MCF 10A (cell line): ENCODE measurements at regions of chr2 and their contacts with region 1.

Region 1: DNA sequence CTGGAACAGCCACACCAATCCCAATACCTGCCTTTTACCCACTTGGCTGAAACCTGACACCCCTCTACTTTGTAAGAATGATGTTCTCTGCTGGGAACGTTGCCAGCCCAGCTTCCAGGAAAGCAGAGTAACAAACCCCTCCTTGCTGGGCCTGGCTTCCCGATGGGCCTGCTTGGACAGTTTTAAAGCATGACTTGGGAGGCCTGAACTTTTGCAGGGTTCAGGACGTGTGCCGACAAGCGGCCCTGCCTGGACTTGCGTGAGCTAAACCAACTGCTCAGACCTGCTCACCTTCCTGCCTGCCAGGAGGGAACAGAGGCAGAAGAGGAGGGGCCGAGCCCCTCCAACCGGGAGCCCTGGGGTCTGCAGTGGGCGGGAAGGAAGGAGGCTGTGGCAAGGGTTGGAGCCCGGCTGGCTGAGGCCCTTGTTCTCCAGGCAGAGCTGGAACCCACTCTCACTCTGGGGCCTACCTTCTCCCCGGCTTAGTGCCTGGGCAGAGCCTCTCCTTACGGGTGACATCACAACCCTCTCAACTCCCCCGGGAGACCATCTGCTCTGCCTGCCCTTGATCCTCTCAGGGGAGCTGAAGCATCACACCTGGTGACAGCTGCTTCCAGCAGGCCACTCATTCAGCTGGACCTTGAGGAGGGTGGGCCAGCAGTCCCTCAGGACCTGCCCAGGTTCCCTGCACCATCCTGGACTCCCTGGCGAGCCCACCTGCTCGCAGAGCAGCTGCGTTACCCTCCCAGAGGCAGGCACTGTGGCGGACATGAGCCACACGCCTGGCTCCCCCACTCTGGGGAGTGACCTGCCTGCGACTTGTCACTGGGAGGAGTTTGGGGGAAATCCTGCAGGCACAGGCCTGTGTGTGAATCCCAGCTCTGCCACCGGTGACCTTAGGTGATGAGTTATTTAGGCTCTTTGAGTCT is 13.2 kb downstream of the HS6ST1 start:
- DNase-seq: peak; percentile 100
- H3K4me3 Mint-ChIP-seq: peak overlapping the region; percentile 60
- H3K27ac Mint-ChIP-seq: peak overlapping the region; percentile 95
- H3K4me1 Mint-ChIP-seq: peaks cover 51% of the 10 kb centered on the region
- H3K27me3 Mint-ChIP-seq: no peaks in the 10 kb centered on the region
- CTCF ChIP-seq: no peak

Region 2: GRCh38 chr2:128069769-128070168 is 235.7 kb before region 1 on chr2:
- CTCF ChIA-PET with region 1: no interaction called
- POLR2A ChIA-PET with region 1: no interaction called
- intact Hi-C with region 1: loop called (anchors 10 kb)
- DNase-seq: peak; percentile 42
- H3K4me3 Mint-ChIP-seq: no peak overlapping the region
- H3K27ac Mint-ChIP-seq: no peak overlapping the region
- H3K4me1 Mint-ChIP-seq: no peaks in the 10 kb centered on the region
- H3K27me3 Mint-ChIP-seq: no peaks in the 10 kb centered on the region
- CTCF ChIP-seq: no peak

Region 3: DNA sequence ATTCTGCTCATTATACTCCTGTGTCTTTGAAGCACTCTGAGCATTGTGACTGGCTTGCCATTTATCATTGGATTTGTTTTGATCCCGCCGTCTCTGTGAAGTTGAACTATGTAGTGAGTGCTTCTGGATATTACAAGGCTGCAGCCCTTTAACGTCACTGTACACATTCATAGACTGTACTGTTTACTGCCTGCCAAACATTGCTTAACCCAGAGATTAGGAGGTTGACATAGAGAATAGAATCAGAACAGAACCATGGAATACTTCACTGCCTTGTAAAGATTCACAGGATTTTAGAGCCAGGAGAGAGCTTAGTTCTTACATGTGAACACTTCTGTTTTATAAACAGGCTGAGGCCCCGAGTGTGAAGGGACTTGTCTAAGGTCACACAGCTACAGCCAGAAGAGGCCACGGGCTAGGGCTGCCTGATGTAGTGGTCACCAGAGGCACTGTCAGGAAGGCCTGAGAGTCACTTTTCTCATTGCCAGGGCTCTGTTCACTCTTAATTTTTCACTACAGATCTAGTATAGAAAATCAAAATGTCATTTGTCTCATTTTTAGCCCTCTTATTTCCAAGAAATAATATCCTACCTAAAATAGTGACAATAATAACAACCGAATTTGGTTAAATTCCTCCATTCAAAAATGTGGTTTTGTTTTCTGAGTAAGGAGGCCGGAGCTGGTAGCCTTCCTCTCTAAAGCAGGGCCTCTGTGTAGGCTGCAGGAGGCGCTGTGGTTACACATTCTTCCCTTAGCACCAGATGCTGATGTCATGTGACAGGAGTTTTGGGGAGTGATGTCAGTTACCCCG is 126.6 kb before region 1 on chr2:
- CTCF ChIA-PET with region 1: interaction called, 3 read pairs
- POLR2A ChIA-PET with region 1: interaction called, 5 read pairs
- intact Hi-C with region 1: loop called (anchors 1 kb)
- DNase-seq: peak; percentile 68
- H3K4me3 Mint-ChIP-seq: no peak overlapping the region
- H3K27ac Mint-ChIP-seq: no peak overlapping the region
- H3K4me1 Mint-ChIP-seq: no peaks in the 10 kb centered on the region
- H3K27me3 Mint-ChIP-seq: no peaks in the 10 kb centered on the region
- CTCF ChIP-seq: peak; percentile 68

Region 4: GRCh38 chr2:128260239-128261138 is 44.9 kb before region 1 on chr2:
- CTCF ChIA-PET with region 1: interaction called, 8 read pairs
- POLR2A ChIA-PET with region 1: interaction called, 4 read pairs
- intact Hi-C with region 1: loop called (anchors 2 kb)
- DNase-seq: peak; percentile 78
- H3K4me3 Mint-ChIP-seq: no peak overlapping the region
- H3K27ac Mint-ChIP-seq: peak overlapping the region; percentile 27
- H3K4me1 Mint-ChIP-seq: no peaks in the 10 kb centered on the region
- H3K27me3 Mint-ChIP-seq: no peaks in the 10 kb centered on the region
- CTCF ChIP-seq: no peak

Region 5: GRCh38 chr2:128513961-128514283 is 208.5 kb after region 1 on chr2:
- CTCF ChIA-PET with region 1: no interaction called
- POLR2A ChIA-PET with region 1: no interaction called
- intact Hi-C with region 1: no loop called
- DNase-seq: no peak
- H3K4me3 Mint-ChIP-seq: no peak overlapping the region
- H3K27ac Mint-ChIP-seq: no peak overlapping the region
- H3K4me1 Mint-ChIP-seq: no peaks in the 10 kb centered on the region
- H3K27me3 Mint-ChIP-seq: no peaks in the 10 kb centered on the region
- CTCF ChIP-seq: no peak